Activated CD4-positive, alpha-beta memory T cell treated with anti-CD3 and anti-CD28 coated beads, Interleukin-2, amount 10 ng/mL, durations not matched to agents 7 days and 5 days (primary cell): ENCODE measurements at regions of chr14 and their contacts with region 1.

Region 1: GRCh38 chr14:106120101-106120500 is 593.7 kb downstream of the TMEM121 start:
- DNase-seq: no peak
- H3K4me3 Mint-ChIP-seq: no peak overlapping the region
- H3K27ac Mint-ChIP-seq: no peak overlapping the region
- H3K4me1 Mint-ChIP-seq: peaks cover 15% of the 10 kb centered on the region
- H3K27me3 Mint-ChIP-seq: peaks cover 52% of the 10 kb centered on the region

Region 2: DNA sequence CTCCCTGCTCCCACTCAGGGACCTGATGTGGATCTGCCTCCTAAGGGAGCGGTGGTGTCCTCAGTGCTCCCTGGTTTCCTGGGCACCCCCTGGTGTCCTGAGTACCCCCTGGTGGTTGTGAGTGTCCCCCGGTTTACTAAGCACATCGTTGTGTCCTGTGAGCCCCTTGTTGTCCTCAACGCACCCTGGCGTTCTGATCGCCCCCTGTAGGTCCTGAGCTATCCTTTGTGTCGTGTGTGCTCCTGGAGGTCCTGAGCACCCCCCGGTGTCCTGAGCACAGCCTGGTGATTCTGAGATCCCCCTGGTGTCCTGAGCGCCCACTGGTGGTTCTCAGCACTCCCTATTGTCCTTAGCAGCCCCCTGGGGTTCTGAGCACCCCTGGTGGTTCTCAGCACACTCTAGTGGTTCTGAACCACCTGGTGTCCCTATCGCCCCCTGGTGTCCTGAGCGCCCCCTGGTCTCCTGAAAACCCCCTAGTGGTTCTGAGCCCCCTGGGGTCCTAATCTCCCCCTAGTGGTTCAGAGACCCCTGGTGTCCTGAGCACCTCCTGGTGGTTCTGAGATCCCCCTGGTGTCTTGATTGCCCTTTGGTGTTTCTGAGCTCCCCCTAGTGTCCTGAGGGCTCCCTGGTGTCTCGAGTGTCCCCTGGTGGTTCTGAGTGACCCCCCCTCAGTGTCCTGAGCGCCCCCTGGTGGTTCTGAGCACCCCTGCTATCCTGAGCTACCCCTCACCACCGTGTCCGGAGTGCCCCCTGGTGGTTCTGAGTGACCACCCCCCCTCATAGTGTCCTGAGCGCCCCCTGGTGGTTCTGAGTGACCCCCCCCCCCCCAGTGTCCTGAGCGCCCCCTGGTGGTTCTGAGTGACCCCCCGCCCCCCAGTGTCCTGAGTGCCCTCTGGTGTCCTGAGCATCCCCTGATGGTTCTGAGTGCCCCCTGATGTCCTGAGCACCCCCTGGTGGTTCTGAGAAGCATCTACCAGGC is 21.4 kb after region 1 on chr14:
- CTCF ChIA-PET with region 1: interaction called, 13 read pairs
- POLR2A ChIA-PET with region 1: no interaction called
- DNase-seq: peak; percentile 58
- H3K4me3 Mint-ChIP-seq: no peak overlapping the region
- H3K27ac Mint-ChIP-seq: no peak overlapping the region
- H3K4me1 Mint-ChIP-seq: peaks cover 11% of the 10 kb centered on the region
- H3K27me3 Mint-ChIP-seq: peaks cover 6% of the 10 kb centered on the region

Region 3: DNA sequence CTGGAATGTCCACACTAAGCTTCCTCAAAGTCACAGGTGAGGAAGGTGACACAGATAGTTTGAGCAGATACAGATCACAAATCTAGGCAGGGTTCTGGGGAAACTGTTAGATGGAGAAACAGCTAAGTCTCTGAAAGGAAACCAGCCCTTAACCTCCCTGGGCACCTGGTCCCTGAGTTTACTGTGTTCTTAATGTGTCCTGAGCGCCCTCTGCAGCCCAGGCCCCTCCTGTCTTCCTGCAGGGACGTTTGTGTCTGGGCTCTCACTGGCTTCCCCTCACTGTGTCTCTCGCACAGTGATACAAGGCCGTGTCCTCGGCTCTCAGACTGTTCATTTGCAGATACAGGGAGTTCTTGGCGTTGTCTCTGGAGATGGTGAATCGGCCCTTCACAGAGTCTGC is 90.6 kb after region 1 on chr14:
- CTCF ChIA-PET with region 1: interaction called, 14 read pairs
- POLR2A ChIA-PET with region 1: no interaction called
- DNase-seq: peak; percentile 36
- H3K4me3 Mint-ChIP-seq: no peak overlapping the region
- H3K27ac Mint-ChIP-seq: no peak overlapping the region
- H3K4me1 Mint-ChIP-seq: peaks cover 6% of the 10 kb centered on the region
- H3K27me3 Mint-ChIP-seq: peaks cover 39% of the 10 kb centered on the region

Region 4: GRCh38 chr14:106538201-106538600 is 418.1 kb after region 1 on chr14:
- CTCF ChIA-PET with region 1: interaction called, 11 read pairs
- POLR2A ChIA-PET with region 1: no interaction called
- DNase-seq: no peak
- H3K4me3 Mint-ChIP-seq: no peak overlapping the region
- H3K27ac Mint-ChIP-seq: no peak overlapping the region
- H3K4me1 Mint-ChIP-seq: peaks cover 5% of the 10 kb centered on the region
- H3K27me3 Mint-ChIP-seq: peaks cover 46% of the 10 kb centered on the region